ENCODE measurements at regions of chr9 and their contacts with region 1.

Region 1: DNA sequence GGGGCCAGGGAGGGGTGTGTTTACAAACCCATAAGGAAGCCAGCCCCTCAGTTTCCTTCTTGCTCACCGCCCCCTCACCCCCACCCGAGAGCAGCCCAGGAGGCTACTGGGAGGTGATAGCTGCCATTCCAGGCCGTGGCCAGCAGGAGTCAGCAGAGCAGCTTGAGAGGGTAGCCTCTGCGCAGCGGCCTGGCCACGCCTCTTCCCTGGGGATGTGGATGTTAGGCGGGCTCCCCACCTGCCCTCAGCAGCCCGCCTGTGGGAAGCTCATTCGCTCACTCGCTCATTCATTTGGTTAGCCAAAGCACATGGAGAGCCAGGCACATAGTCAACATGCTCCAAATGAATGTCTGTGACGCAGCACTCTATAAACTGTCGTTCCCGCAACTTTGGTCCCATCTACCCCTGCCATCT is 6.1 kb upstream of the DPM2 start:
- DNase-seq: peak; percentile 86
- ATAC-seq: peak; percentile 77
- H3K4me3 Mint-ChIP-seq: no peak overlapping the region
- H3K27ac Mint-ChIP-seq: no peak overlapping the region
- H3K4me1 Mint-ChIP-seq: peaks cover 15% of the 10 kb centered on the region
- H3K27me3 Mint-ChIP-seq: no peaks in the 10 kb centered on the region

Region 2: DNA sequence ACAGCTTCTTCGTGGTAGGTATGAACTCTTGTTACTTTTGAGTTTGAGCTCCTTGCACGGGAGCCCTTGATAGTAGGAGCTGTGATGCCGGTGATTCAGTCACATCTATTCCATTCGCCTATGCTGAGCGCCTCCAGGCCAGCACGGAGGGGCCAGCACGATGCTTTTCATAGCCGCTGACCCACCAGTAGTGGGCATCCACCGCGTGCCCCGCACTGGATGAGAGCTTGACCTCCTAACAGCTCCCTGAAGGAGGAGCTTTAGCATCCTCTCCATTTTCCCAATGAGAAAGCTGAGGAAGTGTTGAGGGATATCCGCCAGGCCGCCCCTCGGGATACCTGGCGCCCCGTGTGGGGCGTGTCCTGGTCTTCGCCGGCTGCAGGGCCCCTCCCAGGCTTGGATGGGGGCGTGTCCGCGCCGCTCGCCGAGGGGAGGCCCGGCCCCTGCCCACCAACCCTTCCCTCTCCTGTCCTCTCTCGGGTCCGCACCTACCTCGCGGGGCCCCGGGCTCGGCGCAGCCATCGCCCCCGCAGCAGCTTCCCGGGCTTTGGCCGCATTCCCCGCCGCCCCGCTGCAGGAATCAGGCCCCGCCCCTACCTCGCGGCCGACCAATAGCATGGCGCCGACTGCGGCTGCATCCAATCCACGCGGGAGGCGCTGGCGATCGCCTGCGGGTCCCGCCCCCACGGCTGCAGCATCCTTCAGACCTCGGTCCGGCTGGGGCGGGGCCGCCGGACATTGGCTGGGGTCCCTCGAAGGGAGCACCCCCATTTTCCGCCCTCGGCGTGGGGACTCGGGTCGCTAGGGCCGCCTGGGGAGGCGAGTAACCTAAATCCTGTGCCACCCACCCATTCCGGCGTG is 13.3 kb before region 1 on chr9 and contains the start of gene PIP5KL1:
- CTCF ChIA-PET with region 1: interaction called, 25 read pairs
- DNase-seq: peak; percentile 80
- ATAC-seq: peak; percentile 86
- H3K4me3 Mint-ChIP-seq: peak within 1 kb of the TSS; percentile 58
- H3K27ac Mint-ChIP-seq: peak within 1 kb of the TSS; percentile 64
- H3K4me1 Mint-ChIP-seq: peaks cover 37% of the 10 kb centered on the region
- H3K27me3 Mint-ChIP-seq: peaks cover 30% of the 10 kb centered on the region
- total RNA-seq, gene PIP5KL1: 1.8 to 2.6 TPM

Region 3: GRCh38 chr9:127963359-127964064 is 19.8 kb after region 1 on chr9:
- CTCF ChIA-PET with region 1: interaction called, 22 read pairs
- DNase-seq: no peak
- ATAC-seq: no peak
- H3K4me3 Mint-ChIP-seq: no peak overlapping the region
- H3K27ac Mint-ChIP-seq: no peak overlapping the region
- H3K4me1 Mint-ChIP-seq: peaks cover 76% of the 10 kb centered on the region
- H3K27me3 Mint-ChIP-seq: no peaks in the 10 kb centered on the region

Region 4: GRCh38 chr9:127980706-127981558 is 37.2 kb after region 1 on chr9 and contains the start of gene EEIG1:
- CTCF ChIA-PET with region 1: interaction called, 64 read pairs
- DNase-seq: peak; percentile 96
- ATAC-seq: peak; percentile 93
- H3K4me3 Mint-ChIP-seq: peak within 1 kb of the TSS; percentile 97
- H3K27ac Mint-ChIP-seq: peak within 1 kb of the TSS; percentile 91
- H3K4me1 Mint-ChIP-seq: peaks cover 52% of the 10 kb centered on the region
- H3K27me3 Mint-ChIP-seq: no peaks in the 10 kb centered on the region
- total RNA-seq, gene EEIG1: 60.8 to 116 TPM

Region 5: DNA sequence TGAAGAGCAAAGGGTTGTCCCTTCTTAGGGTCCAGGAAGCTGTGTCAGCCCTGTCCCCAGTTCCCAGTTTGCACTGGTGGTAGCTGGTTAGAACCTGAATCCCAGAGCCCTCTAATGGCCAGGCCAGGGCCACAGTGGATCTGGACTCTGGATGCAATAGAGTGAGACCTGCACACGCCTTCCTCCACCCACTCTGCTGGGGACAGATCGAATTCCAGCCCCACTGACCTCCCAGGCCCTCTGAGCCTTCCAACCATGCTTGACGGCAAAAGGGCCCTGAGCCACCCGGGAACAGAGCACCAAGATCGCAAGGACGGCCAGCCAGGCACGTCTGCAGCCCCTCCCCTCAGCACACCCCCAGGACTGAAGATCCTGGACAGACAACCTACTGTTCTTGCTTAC is 99.7 kb after region 1 on chr9:
- CTCF ChIA-PET with region 1: interaction called, 347 read pairs
- DNase-seq: no peak
- ATAC-seq: no peak
- H3K4me3 Mint-ChIP-seq: no peak overlapping the region
- H3K27ac Mint-ChIP-seq: no peak overlapping the region
- H3K4me1 Mint-ChIP-seq: peaks cover 5% of the 10 kb centered on the region
- H3K27me3 Mint-ChIP-seq: peaks cover 2% of the 10 kb centered on the region

Region 6: DNA sequence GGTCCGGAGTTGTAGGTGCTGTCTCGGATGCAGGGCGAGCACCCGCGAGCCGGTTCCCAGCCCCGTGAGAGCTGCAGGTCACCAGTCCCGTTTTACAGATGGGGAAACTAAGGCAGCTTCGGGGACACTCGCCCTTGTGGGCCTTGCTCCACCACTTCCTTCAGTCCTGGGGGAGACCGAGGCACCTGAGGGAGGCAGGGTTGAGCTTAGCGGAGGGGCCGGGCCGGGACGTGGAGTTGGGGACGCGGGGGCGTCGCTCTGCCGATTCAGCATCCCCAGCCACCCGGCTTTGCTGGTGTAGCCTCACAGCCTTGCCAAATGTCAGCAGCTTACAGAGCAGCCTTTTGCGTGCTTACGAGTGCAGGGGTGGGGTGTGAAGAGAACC is 216.9 kb after region 1 on chr9:
- CTCF ChIA-PET with region 1: no interaction called
- DNase-seq: peak; percentile 66
- ATAC-seq: peak; percentile 18
- H3K4me3 Mint-ChIP-seq: peak overlapping the region; percentile 80
- H3K27ac Mint-ChIP-seq: peak overlapping the region; percentile 79
- H3K4me1 Mint-ChIP-seq: peaks cover 15% of the 10 kb centered on the region
- H3K27me3 Mint-ChIP-seq: no peaks in the 10 kb centered on the region

Region 7: GRCh38 chr9:128428644-128429512 is 485.1 kb after region 1 on chr9:
- CTCF ChIA-PET with region 1: no interaction called
- DNase-seq: no peak
- ATAC-seq: no peak
- H3K4me3 Mint-ChIP-seq: no peak overlapping the region
- H3K27ac Mint-ChIP-seq: no peak overlapping the region
- H3K4me1 Mint-ChIP-seq: no peaks in the 10 kb centered on the region
- H3K27me3 Mint-ChIP-seq: no peaks in the 10 kb centered on the region

Measured in activated CD8-positive, alpha-beta memory T cell treated with anti-CD3 and anti-CD28 coated beads, Interleukin-2, amount 10 ng/mL, durations not matched to agents 7 days and 5 days (primary cell).